CD4-positive, alpha-beta T cell (primary cell): ENCODE measurements at regions of chr4 and their contacts with region 1.

Region 1: GRCh38 chr4:48085821-48086607 is 48.0 kb downstream of the TXK start:
- DNase-seq: no peak
- ATAC-seq: no peak
- H3K4me3 ChIP-seq: no peak overlapping the region
- H3K4me3 Mint-ChIP-seq: no peak overlapping the region
- H3K27ac ChIP-seq: no peak overlapping the region
- H3K27ac Mint-ChIP-seq: no peak overlapping the region
- H3K4me1 ChIP-seq: no peaks in the 10 kb centered on the region
- H3K4me1 Mint-ChIP-seq: peaks cover 15% of the 10 kb centered on the region
- H3K27me3 ChIP-seq: no peaks in the 10 kb centered on the region
- H3K27me3 Mint-ChIP-seq: no peaks in the 10 kb centered on the region
- CTCF ChIP-seq: no peak

Region 2: GRCh38 chr4:47926639-47927258 is 159.3 kb before region 1 on chr4:
- CTCF ChIA-PET with region 1: no interaction called
- POLR2A ChIA-PET with region 1: no interaction called
- intact Hi-C with region 1: loop called (anchors 5 kb)
- DNase-seq: peak; percentile 22 to 72 (median 34)
- ATAC-seq: peak; percentile 98
- H3K4me3 ChIP-seq: no peak overlapping the region
- H3K4me3 Mint-ChIP-seq: peak overlapping the region; percentile 8
- H3K27ac ChIP-seq: no peak overlapping the region
- H3K27ac Mint-ChIP-seq: no peak overlapping the region
- H3K4me1 ChIP-seq: peaks cover 5% of the 10 kb centered on the region
- H3K4me1 Mint-ChIP-seq: peaks cover 13% of the 10 kb centered on the region
- H3K27me3 ChIP-seq: no peaks in the 10 kb centered on the region
- H3K27me3 Mint-ChIP-seq: peaks cover 34% of the 10 kb centered on the region
- CTCF ChIP-seq: peak; percentile 82

Region 3: DNA sequence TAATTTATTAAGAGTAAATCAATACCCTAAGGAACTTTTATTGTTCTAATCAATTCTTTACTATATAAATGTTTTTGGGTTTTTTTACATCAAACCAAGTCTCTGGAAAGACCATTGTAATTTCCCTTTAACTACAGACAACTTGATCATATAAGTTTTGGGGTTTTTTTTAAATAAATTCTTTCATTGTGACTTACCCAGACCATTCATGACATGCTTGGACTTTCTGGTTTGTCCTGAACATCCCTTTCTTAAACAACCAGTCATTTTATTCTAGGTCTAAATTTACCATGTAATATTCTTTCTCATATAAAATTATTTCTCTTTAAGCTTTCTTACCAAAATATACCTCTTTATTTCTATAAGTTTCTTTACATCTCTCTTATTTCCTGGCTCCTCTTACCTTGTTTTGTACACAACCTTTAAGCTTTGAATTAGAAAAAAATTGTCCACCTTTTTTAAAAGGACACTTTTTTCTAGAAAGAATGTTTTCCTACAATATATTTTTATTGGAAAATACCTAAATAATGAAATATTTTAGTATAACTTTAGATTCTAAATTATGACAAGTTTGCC is 77.9 kb before region 1 on chr4:
- CTCF ChIA-PET with region 1: no interaction called
- POLR2A ChIA-PET with region 1: no interaction called
- intact Hi-C with region 1: loop called in 1 of 2 experiments (anchors 1 kb)
- DNase-seq: no peak
- ATAC-seq: no peak
- H3K4me3 ChIP-seq: no peak overlapping the region
- H3K4me3 Mint-ChIP-seq: no peak overlapping the region
- H3K27ac ChIP-seq: no peak overlapping the region
- H3K27ac Mint-ChIP-seq: no peak overlapping the region
- H3K4me1 ChIP-seq: no peaks in the 10 kb centered on the region
- H3K4me1 Mint-ChIP-seq: no peaks in the 10 kb centered on the region
- H3K27me3 ChIP-seq: peaks cover 0 to 5% of the 10 kb centered on the region in 2 experiments
- H3K27me3 Mint-ChIP-seq: peaks cover 17% of the 10 kb centered on the region
- CTCF ChIP-seq: no peak

Region 4: DNA sequence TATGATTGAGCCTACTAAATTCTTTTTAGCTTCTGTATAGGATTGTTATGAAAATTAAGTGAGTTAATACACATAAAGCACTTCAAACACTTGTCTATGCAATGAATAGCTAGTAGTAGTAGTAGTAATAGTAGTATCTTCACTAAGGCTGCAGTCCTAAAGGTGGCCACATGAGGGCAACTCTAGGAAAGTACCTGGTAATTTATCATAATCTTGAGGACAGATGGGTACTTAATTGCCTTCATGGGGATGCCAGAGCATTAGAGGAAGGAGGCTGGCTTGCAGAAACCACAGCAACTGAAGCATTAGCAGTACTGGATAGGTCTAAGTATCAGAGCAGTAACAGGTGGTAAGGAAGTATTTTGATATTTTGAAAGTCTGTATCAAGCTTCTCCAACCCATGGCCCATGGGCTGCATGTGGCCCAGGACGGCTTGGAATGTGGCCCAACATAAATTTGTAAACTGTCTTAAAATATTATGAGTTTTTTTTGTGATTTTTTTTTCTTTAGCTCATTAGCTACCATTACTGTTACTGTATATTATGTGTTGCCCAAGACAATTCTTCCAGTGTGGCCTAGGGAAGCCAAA is 52.1 kb before region 1 on chr4:
- CTCF ChIA-PET with region 1: interaction called, 8 read pairs
- POLR2A ChIA-PET with region 1: no interaction called
- intact Hi-C with region 1: loop called (anchors 1 to 2 kb)
- DNase-seq: peak; percentile 31 to 75 (median 51)
- ATAC-seq: peak; percentile 95
- H3K4me3 ChIP-seq: no peak overlapping the region
- H3K4me3 Mint-ChIP-seq: no peak overlapping the region
- H3K27ac ChIP-seq: no peak overlapping the region
- H3K27ac Mint-ChIP-seq: no peak overlapping the region
- H3K4me1 ChIP-seq: peaks cover 3% of the 10 kb centered on the region
- H3K4me1 Mint-ChIP-seq: peaks cover 5% of the 10 kb centered on the region
- H3K27me3 ChIP-seq: no peaks in the 10 kb centered on the region
- H3K27me3 Mint-ChIP-seq: no peaks in the 10 kb centered on the region
- CTCF ChIP-seq: peak; percentile 84